ENCODE measurements at regions of chr10 and their contacts with region 1.

Region 1: GRCh38 chr10:99605349-99605748 is 14.9 kb downstream of the SLC25A28 start:
- DNase-seq: no peak
- H3K4me3 ChIP-seq: no peak overlapping the region
- H3K27ac ChIP-seq: no peak overlapping the region
- H3K4me1 ChIP-seq: no peaks in the 10 kb centered on the region
- H3K27me3 ChIP-seq: no peaks in the 10 kb centered on the region
- CTCF ChIP-seq: no peak
- POLR2A ChIP-seq: no peak

Region 2: DNA sequence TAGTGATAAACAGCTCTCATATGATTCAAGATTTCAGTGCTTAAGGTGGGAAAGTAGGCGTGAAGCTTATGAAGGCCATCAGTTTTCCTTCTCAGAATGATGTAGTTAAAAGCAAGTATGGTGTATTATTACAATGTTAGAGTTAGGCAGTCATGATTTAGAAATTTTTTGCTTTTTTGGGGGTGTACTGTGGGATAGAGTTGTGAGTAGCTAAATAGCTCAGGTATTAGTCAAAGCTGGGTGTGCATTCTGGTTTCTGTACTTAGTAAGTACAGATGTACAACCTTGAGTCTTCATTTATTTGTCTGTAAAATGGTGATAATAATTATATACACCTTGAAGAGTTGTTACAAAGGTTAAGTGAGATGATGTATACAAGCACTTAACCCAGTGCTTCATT is 1418.7 kb before region 1 on chr10:
- intact Hi-C with region 1: loop called (anchors 10 kb)
- DNase-seq: no peak
- H3K4me3 ChIP-seq: no peak overlapping the region
- H3K27ac ChIP-seq: no peak overlapping the region
- H3K4me1 ChIP-seq: no peaks in the 10 kb centered on the region
- H3K27me3 ChIP-seq: no peaks in the 10 kb centered on the region
- CTCF ChIP-seq: no peak
- POLR2A ChIP-seq: no peak

Region 3: GRCh38 chr10:99659031-99659867 is 53.9 kb after region 1 on chr10 and contains the start of gene ENTPD7:
- intact Hi-C with region 1: no loop called
- DNase-seq: peak; percentile 92 to 94
- H3K4me3 ChIP-seq: peak within 1 kb of the TSS; percentile 60 to 81 (median 75)
- H3K27ac ChIP-seq: peak within 1 kb of the TSS; percentile 52 to 56
- H3K4me1 ChIP-seq: peaks cover 0 to 11% of the 10 kb centered on the region in 2 donors
- H3K27me3 ChIP-seq: no peaks in the 10 kb centered on the region
- CTCF ChIP-seq: peak; percentile 44 to 59 (median 50)
- POLR2A ChIP-seq: no peak
- total RNA-seq, gene ENTPD7: 3.5 to 11.6 (median 10.8) TPM

Measured in breast epithelium (tissue), 4 donors.